ENCODE measurements at regions of chr6 and their contacts with region 1.

Region 1: DNA sequence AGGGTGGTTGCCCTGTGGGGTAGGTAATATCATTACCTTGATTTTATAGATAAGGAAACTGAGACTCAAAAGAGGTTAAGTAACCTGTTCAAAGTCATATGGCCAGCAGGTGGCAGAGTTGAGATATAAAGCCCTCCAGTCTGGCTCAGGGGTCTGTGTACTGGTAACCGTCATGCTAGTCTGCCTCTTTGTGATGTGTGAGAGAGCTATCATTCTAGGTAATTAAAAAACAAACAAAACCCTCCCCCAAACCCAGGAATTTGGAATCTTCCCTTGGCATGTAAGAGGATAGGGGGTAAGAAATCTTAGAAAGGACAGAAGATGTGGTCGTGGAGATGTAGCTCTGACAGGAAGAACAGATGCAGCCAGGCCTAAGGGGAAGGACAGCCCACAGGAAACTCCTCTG is 206.0 kb downstream of the CDC5L start:
- DNase-seq: peak; percentile 56 to 82
- H3K4me3 ChIP-seq: no peak overlapping the region
- H3K27ac ChIP-seq: no peak overlapping the region
- H3K4me1 ChIP-seq: peaks cover 0 to 3% (median 0%) of the 10 kb centered on the region in 4 experiments; a peak in 2 of 7 replicates
- H3K27me3 ChIP-seq: no peaks in the 10 kb centered on the region
- CTCF ChIP-seq: peak in 2 of 3 experiments; percentile 68 to 69; a peak in 3 of 4 replicates
- EP300 ChIP-seq: peak in 1 of 2 experiments; percentile 21; a peak in 1 of 3 replicates
- POLR2A ChIP-seq: no peak
- RAD21 ChIP-seq: peak; percentile 69 to 81

Region 2: DNA sequence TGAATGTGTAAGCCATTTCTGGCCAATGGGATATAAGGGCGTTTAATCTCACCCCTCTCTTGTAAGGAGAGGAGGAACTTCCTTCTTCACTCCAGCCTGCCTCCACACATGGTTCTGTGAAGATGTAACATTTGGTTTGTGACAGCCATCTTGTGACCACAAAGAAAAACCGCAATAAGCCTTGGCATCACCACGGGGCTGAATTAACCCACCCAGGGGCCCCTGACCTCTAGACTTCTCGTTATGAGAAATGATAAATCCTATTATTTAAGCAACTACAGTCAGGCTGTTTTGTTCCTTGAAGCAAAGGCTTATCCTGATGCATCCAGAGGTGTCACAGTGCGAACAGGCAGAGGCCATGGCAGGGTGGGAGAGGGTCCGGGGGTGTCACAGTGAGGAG is 66.4 kb before region 1 on chr6:
- CTCF ChIA-PET with region 1: no interaction called
- POLR2A ChIA-PET with region 1: no interaction called
- DNase-seq: no peak
- H3K4me3 ChIP-seq: no peak overlapping the region
- H3K27ac ChIP-seq: no peak overlapping the region
- H3K4me1 ChIP-seq: peaks cover 0 to 3% (median 0%) of the 10 kb centered on the region in 4 experiments; a peak in 2 of 7 replicates
- H3K27me3 ChIP-seq: no peaks in the 10 kb centered on the region; a peak in 1 of 7 replicates
- CTCF ChIP-seq: no peak
- EP300 ChIP-seq: no peak
- POLR2A ChIP-seq: no peak
- RAD21 ChIP-seq: no peak

Region 3: DNA sequence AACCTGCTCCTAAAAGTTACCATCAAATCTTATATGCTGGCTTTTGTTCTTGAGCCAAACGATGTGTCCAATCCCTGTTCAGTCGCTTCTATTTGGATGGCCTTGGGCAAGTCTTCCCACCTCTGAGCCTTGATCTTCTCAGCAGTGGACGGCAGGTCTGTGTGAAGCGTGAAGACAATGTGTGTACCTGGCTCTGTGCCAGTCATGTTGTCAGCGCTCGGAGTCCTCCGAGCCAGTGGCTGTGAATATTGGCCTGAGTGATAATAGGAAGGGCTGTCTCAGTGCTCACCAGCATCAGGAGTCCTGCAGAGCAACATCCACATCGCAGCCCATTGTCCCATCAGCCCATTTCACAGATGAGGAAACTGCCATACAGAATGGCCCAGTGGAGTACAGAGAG is 13.0 kb after region 1 on chr6:
- CTCF ChIA-PET with region 1: interaction called, 19 read pairs
- POLR2A ChIA-PET with region 1: no interaction called
- DNase-seq: no peak
- H3K4me3 ChIP-seq: no peak overlapping the region
- H3K27ac ChIP-seq: no peak overlapping the region
- H3K4me1 ChIP-seq: no peaks in the 10 kb centered on the region
- H3K27me3 ChIP-seq: no peaks in the 10 kb centered on the region
- CTCF ChIP-seq: no peak
- EP300 ChIP-seq: no peak
- POLR2A ChIP-seq: no peak
- RAD21 ChIP-seq: no peak

Region 4: DNA sequence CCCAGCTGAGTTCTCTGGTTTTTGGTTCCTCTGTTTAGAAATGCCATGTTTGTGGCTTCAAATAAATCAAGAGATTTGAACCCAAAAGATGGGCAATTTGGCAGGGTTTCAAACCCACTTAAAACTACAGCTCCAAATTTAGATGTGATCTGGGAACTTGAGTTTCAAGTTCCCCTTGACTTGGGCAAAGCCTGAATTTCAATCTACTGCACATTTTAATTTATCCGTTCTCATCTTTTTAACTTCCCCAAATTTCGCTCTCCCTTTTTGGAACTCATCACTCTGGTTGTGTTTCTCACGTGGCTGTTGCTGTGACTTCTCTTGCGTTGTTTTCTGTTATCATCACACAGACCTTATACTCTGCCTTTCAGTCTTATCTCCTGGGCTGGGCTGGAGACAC is 24.8 kb after region 1 on chr6:
- CTCF ChIA-PET with region 1: interaction called, 10 read pairs
- POLR2A ChIA-PET with region 1: no interaction called
- DNase-seq: no peak
- H3K4me3 ChIP-seq: no peak overlapping the region
- H3K27ac ChIP-seq: no peak overlapping the region
- H3K4me1 ChIP-seq: peaks cover 0 to 10% (median 5%) of the 10 kb centered on the region in 4 experiments; a peak in 3 of 7 replicates
- H3K27me3 ChIP-seq: 0 out of 7 replicates have a peak, but pooled peaks cover 0 to 2% (median 0%) of the 10 kb centered on the region in 4 experiments
- CTCF ChIP-seq: no peak
- EP300 ChIP-seq: no peak
- POLR2A ChIP-seq: no peak
- RAD21 ChIP-seq: no peak

Measured in H1 (cell line).